PC-9 (cell line): ENCODE measurements at regions of chr14 and their contacts with region 1.

Region 1: DNA sequence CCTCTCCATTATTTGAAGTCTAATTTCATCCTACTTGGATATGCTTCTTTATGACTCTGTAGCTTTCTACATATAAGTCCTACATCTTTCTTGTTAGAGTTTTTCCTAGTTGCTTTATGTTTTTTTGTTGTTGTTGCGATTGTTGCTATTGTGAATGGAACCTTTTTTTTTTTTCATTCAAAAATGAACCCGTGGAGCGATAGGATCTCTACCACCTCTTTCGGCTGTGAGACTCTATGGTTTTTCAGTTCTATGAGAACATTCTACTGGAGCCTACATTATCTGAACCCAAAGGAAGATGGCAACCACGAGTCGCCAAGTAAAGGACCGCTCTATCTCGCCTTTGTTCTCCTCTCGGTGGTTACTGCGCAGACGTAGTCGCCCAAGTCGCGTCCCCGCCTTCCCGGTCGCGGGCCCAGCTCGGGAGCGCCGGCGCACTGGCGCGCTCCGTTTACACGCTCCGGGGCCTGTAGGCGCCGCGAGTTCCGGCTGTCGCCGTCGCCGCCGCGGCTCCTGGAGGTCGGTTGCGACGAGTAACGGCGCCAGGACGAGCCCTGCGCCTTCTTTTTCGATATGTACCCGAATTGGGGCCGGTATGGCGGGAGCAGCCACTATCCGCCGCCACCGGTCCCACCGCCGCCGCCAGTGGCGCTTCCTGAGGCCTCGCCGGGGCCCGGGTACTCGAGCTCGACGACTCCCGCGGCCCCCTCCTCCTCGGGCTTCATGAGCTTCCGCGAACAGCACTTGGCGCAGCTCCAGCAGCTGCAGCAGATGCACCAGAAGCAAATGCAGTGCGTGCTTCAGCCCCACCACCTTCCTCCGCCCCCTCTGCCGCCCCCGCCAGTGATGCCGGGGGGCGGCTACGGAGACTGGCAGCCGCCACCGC is at the start of gene YLPM1:
- DNase-seq: peak; percentile 98 to 99
- H3K4me3 ChIP-seq: peak within 1 kb of the TSS; percentile 80
- H3K27ac ChIP-seq: peak within 1 kb of the TSS; percentile 55
- H3K4me1 ChIP-seq: peaks cover 45% of the 10 kb centered on the region
- H3K27me3 ChIP-seq: no peaks in the 10 kb centered on the region
- CTCF ChIP-seq: peak; percentile 40; the same call in 1 of the 2 replicates
- total RNA-seq, gene YLPM1: 146 and 170 TPM in 2 replicates

Region 2: GRCh38 chr14:74302634-74303577 is 460.3 kb before region 1 on chr14 and contains the start of gene ABCD4:
- CTCF ChIA-PET with region 1: no interaction called
- POLR2A ChIA-PET with region 1: no interaction called
- intact Hi-C with region 1: loop called (anchors 2 kb)
- DNase-seq: peak; percentile 96 to 100
- H3K4me3 ChIP-seq: peak within 1 kb of the TSS; percentile 61
- H3K27ac ChIP-seq: peak within 1 kb of the TSS; percentile 35
- H3K4me1 ChIP-seq: peaks cover 16% of the 10 kb centered on the region
- H3K27me3 ChIP-seq: no peaks in the 10 kb centered on the region
- CTCF ChIP-seq: peak; percentile 66; the same call in 1 of the 2 replicates
- total RNA-seq, gene ABCD4: 150 and 179 TPM in 2 replicates

Region 3: GRCh38 chr14:74493343-74494261 is 269.6 kb before region 1 on chr14 and contains the start of gene ISCA2:
- CTCF ChIA-PET with region 1: no interaction called
- POLR2A ChIA-PET with region 1: interaction called, 25 read pairs
- intact Hi-C with region 1: loop called (anchors 2 kb)
- DNase-seq: peak; percentile 100
- H3K4me3 ChIP-seq: peak within 1 kb of the TSS; percentile 81
- H3K27ac ChIP-seq: peak within 1 kb of the TSS; percentile 54
- H3K4me1 ChIP-seq: peaks cover 52% of the 10 kb centered on the region
- H3K27me3 ChIP-seq: no peaks in the 10 kb centered on the region
- CTCF ChIP-seq: no peak
- total RNA-seq, gene ISCA2: 83.2 and 86.5 TPM in 2 replicates

Region 4: GRCh38 chr14:74621556-74621955 is 141.6 kb before region 1 on chr14:
- CTCF ChIA-PET with region 1: no interaction called
- POLR2A ChIA-PET with region 1: no interaction called
- intact Hi-C with region 1: no loop called
- DNase-seq: no peak
- H3K4me3 ChIP-seq: no peak overlapping the region
- H3K27ac ChIP-seq: peak overlapping the region; percentile 84
- H3K4me1 ChIP-seq: peaks cover 66% of the 10 kb centered on the region
- H3K27me3 ChIP-seq: no peaks in the 10 kb centered on the region
- CTCF ChIP-seq: no peak

Region 5: GRCh38 chr14:74804219-74804826 is 41.2 kb after region 1 on chr14:
- CTCF ChIA-PET with region 1: interaction called, 3 read pairs
- POLR2A ChIA-PET with region 1: interaction called, 11 read pairs
- intact Hi-C with region 1: no loop called
- DNase-seq: peak; percentile 59 to 65
- H3K4me3 ChIP-seq: no peak overlapping the region
- H3K27ac ChIP-seq: no peak overlapping the region
- H3K4me1 ChIP-seq: no peaks in the 10 kb centered on the region
- H3K27me3 ChIP-seq: no peaks in the 10 kb centered on the region
- CTCF ChIP-seq: peak; percentile 89

Region 6: DNA sequence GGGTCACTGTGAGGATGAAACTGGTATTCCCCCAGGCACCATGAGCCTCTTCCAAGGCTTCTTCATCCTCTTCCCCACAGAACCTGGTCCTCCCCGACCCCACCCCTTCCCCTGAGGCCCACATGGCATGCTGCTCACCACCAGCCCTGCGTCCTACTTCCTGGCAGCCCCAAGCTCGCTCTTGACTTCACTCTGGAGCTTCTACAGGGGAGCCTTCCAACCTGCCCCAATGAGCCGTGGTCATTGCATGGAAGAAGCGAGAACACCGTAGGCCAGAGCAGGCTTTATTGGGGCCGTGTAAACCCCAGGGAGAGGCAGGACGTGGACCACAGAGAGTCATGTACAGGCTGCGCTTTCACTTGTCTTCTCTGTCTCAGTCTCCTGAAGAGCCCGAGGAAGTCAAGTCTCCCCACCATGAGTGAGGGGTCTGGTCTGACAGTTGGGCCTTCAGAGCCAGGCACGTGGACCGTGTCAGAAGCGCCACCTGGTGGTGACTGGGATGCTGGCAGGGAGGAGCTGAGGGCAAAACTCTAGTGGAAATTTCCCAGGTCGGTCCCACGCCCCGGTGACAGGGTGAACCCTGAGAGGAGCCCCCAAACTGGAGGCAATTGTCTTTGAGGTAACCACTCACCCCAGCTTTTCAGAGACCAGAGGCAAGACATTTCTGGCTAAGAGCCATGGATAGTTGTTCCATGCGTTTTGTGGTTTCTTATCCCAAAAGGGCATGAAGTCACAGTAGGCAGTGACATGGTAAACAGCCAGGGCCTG is 142.4 kb after region 1 on chr14:
- CTCF ChIA-PET with region 1: no interaction called
- POLR2A ChIA-PET with region 1: no interaction called
- intact Hi-C with region 1: no loop called
- DNase-seq: peak in 1 of 2 experiments; percentile 78
- H3K4me3 ChIP-seq: no peak overlapping the region
- H3K27ac ChIP-seq: no peak overlapping the region
- H3K4me1 ChIP-seq: no peaks in the 10 kb centered on the region
- H3K27me3 ChIP-seq: no peaks in the 10 kb centered on the region
- CTCF ChIP-seq: peak; percentile 100

Region 7: GRCh38 chr14:75069045-75069810 is 306.1 kb after region 1 on chr14 and contains the start of gene ZC2HC1C:
- CTCF ChIA-PET with region 1: no interaction called
- POLR2A ChIA-PET with region 1: no interaction called
- intact Hi-C with region 1: no loop called
- DNase-seq: peak; percentile 94 to 100
- H3K4me3 ChIP-seq: peak within 1 kb of the TSS; percentile 71
- H3K27ac ChIP-seq: peak within 1 kb of the TSS; percentile 79
- H3K4me1 ChIP-seq: peaks cover 32% of the 10 kb centered on the region
- H3K27me3 ChIP-seq: no peaks in the 10 kb centered on the region
- CTCF ChIP-seq: no peak
- total RNA-seq, gene ZC2HC1C: 11.9 and 13.8 TPM in 2 replicates

Region 8: DNA sequence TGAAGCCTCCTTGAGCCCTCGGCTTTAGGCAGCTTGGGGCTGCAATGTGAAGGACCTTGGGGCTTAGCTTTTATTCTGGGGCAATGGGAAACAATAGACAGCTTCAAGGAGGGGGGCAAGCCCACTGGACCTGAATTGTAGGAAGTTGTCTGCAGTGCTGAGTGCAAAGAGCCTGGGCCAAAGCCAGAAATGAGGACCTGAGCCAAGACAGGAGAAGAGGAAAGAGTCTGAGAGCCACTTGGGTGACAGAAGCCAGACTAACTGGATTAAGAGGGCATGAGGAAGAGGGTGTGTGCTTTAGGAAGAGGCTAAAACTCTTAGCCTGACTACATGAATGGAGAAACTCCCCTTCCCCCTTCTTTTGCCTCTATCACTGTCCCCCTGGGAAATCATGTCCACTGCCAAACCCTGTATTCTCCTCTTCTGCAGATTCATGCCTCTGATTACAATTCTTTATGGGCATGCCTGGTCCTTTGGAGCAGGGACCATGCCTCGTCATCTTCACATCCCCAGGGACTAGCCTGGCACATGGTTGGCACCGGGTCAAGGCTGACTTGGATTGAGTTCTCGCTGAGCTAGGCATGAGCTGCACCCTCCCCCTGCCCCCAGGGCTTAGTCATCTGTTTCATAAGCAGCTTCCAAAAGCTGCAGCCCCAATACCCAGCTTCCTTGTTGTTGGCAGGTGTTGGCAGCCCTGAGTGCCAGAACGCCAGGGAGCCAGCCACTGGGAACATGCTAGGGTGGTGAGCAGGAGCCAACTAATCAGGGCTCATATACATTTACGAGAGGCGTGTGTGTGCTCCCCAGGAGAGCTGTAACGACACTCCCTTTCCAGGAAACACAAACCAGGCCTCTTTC is 636.9 kb after region 1 on chr14:
- CTCF ChIA-PET with region 1: no interaction called
- POLR2A ChIA-PET with region 1: interaction called, 16 read pairs
- intact Hi-C with region 1: no loop called
- DNase-seq: peak; percentile 100
- H3K4me3 ChIP-seq: peak overlapping the region; percentile 17; the same call in 1 of the 2 replicates
- H3K27ac ChIP-seq: peak overlapping the region; percentile 70
- H3K4me1 ChIP-seq: peaks cover 31% of the 10 kb centered on the region
- H3K27me3 ChIP-seq: no peaks in the 10 kb centered on the region
- CTCF ChIP-seq: no peak